Endothelial cell of umbilical vein (primary cell): ENCODE measurements at regions of chr12 and their contacts with region 1.

Region 1: DNA sequence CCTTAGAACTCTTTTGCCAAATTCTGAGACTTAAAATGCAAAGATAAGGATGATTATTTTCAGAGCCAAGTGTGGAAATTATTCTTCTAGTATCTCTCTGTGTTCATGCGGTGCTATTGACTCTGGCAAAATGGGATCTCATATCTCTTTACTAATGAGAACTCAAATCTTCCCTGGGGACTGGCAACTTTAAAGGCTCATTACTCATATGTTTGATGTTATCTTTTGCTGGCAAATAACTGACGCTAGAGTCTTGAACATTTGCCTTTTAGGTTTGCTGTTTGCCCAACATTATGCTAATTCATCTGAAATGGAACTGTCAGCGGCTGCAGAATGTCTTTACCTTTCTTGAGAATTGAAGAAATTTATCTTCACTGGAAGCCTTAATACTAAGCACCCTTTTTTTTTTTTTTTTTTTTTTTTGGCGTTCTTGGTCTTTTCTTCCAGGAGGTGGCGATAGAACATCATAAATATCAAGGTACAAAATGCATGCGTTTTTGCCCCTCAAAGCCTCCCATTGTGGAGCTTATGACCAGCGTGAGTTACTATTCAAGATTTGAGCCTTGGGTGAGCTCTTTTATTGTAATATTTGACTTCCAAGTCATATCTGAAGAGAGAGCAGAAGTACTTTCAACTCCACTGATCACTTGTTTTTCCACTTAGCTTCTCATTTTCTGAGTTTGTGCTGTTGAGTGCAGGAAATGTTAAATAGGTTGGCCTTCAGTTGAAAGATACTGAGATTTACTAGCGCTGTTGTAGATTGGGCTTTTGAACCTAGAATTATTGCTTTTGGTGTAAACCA is 86.6 kb downstream of the CAND1 start:
- DNase-seq: peak; percentile 62
- H3K4me3 ChIP-seq: no peak overlapping the region
- H3K27ac ChIP-seq: no peak overlapping the region
- H3K4me1 ChIP-seq: no peaks in the 10 kb centered on the region
- H3K27me3 ChIP-seq: peaks cover 0 to 3% of the 10 kb centered on the region in 2 experiments
- CTCF ChIP-seq: peak; percentile 31 to 43
- POLR2A ChIP-seq: no peak

Region 2: GRCh38 chr12:67344979-67345710 is 10.6 kb before region 1 on chr12:
- CTCF ChIA-PET with region 1: interaction called, 17 read pairs
- POLR2A ChIA-PET with region 1: no interaction called
- dilution Hi-C with region 1: no loop called
- intact Hi-C with region 1: no loop called
- DNase-seq: no peak
- H3K4me3 ChIP-seq: no peak overlapping the region
- H3K27ac ChIP-seq: no peak overlapping the region
- H3K4me1 ChIP-seq: no peaks in the 10 kb centered on the region
- H3K27me3 ChIP-seq: no peaks in the 10 kb centered on the region
- CTCF ChIP-seq: no peak
- POLR2A ChIP-seq: no peak

Region 3: GRCh38 chr12:67410667-67411067 is 54.9 kb after region 1 on chr12:
- CTCF ChIA-PET with region 1: interaction called, 10 read pairs
- POLR2A ChIA-PET with region 1: no interaction called
- dilution Hi-C with region 1: no loop called
- intact Hi-C with region 1: no loop called
- DNase-seq: no peak
- H3K4me3 ChIP-seq: no peak overlapping the region
- H3K27ac ChIP-seq: no peak overlapping the region
- H3K4me1 ChIP-seq: no peaks in the 10 kb centered on the region
- H3K27me3 ChIP-seq: no peaks in the 10 kb centered on the region
- CTCF ChIP-seq: no peak
- POLR2A ChIP-seq: no peak

Region 4: GRCh38 chr12:67943226-67943892 is 587.6 kb after region 1 on chr12:
- CTCF ChIA-PET with region 1: interaction called, 573 read pairs
- POLR2A ChIA-PET with region 1: no interaction called
- dilution Hi-C with region 1: no loop called
- intact Hi-C with region 1: no loop called
- DNase-seq: peak; percentile 64
- H3K4me3 ChIP-seq: no peak overlapping the region
- H3K27ac ChIP-seq: no peak overlapping the region
- H3K4me1 ChIP-seq: no peaks in the 10 kb centered on the region
- H3K27me3 ChIP-seq: peaks cover 0 to 4% of the 10 kb centered on the region in 2 experiments
- CTCF ChIP-seq: peak; percentile 44 to 50
- POLR2A ChIP-seq: no peak

Region 5: GRCh38 chr12:68158432-68158831 is 802.7 kb after region 1 on chr12:
- CTCF ChIA-PET with region 1: interaction called, 24 read pairs
- POLR2A ChIA-PET with region 1: no interaction called
- dilution Hi-C with region 1: no loop called
- intact Hi-C with region 1: no loop called
- DNase-seq: no peak
- H3K4me3 ChIP-seq: no peak overlapping the region
- H3K27ac ChIP-seq: no peak overlapping the region
- H3K4me1 ChIP-seq: no peaks in the 10 kb centered on the region
- H3K27me3 ChIP-seq: no peaks in the 10 kb centered on the region
- CTCF ChIP-seq: peak in 1 of 2 donors; percentile 1
- POLR2A ChIP-seq: no peak

Region 6: DNA sequence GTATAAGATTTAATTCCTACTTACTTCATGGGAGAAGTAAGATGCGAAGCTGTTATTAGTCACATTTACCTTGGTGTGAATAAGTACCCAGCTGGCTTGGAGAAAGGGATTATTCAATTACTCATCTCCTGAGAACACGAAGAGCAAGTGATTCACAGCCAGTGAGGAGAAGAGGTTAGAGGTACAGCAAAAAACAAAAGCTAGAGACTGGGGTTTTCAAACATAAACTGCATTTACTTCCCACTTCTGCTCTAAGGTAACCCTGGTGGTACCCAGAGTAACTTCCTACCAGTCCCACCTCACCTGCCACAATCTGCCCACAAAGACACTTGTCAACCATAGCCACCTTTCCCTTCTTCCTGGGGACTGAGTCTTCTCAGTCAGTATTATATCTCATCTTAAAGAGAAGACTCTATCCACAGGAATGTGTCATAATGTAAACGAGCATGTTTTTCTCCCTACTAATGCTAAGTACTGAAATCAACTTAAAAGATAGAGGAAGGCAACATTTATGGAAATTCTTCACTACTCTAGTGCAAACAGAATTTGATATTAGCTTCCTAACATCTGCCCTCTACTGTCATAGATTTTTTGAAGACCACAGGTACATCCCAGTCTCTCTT is 903.6 kb after region 1 on chr12:
- CTCF ChIA-PET with region 1: no interaction called
- POLR2A ChIA-PET with region 1: no interaction called
- dilution Hi-C with region 1: no loop called
- intact Hi-C with region 1: no loop called
- DNase-seq: peak; percentile 19
- H3K4me3 ChIP-seq: no peak overlapping the region
- H3K27ac ChIP-seq: no peak overlapping the region
- H3K4me1 ChIP-seq: no peaks in the 10 kb centered on the region
- H3K27me3 ChIP-seq: no peaks in the 10 kb centered on the region
- CTCF ChIP-seq: no peak
- POLR2A ChIP-seq: no peak

Region 7: GRCh38 chr12:68317047-68317667 is 961.4 kb after region 1 on chr12:
- CTCF ChIA-PET with region 1: interaction called, 25 read pairs
- POLR2A ChIA-PET with region 1: no interaction called
- dilution Hi-C with region 1: no loop called
- intact Hi-C with region 1: no loop called
- DNase-seq: peak; percentile 49
- H3K4me3 ChIP-seq: no peak overlapping the region
- H3K27ac ChIP-seq: no peak overlapping the region
- H3K4me1 ChIP-seq: no peaks in the 10 kb centered on the region
- H3K27me3 ChIP-seq: no peaks in the 10 kb centered on the region
- CTCF ChIP-seq: peak; percentile 34 to 38
- POLR2A ChIP-seq: no peak